CD4-positive, alpha-beta memory T cell (primary cell): ENCODE measurements at regions of chr1 and their contacts with region 1.

Region 1: GRCh38 chr1:11681071-11681771 is at the start of gene MAD2L2:
- DNase-seq: peak; percentile 87 to 89 (median 88)
- H3K4me3 ChIP-seq: peak within 1 kb of the TSS; percentile 52 to 87
- H3K4me3 Mint-ChIP-seq: peak within 1 kb of the TSS; percentile 93 to 99 (median 96)
- H3K27ac ChIP-seq: peak within 1 kb of the TSS; percentile 76
- H3K27ac Mint-ChIP-seq: peak within 1 kb of the TSS; percentile 89 to 96 (median 91)
- H3K4me1 ChIP-seq: peaks cover 21% of the 10 kb centered on the region
- H3K4me1 Mint-ChIP-seq: peaks cover 10 to 25% (median 18%) of the 10 kb centered on the region in 4 donors
- H3K27me3 ChIP-seq: no peaks in the 10 kb centered on the region
- H3K27me3 Mint-ChIP-seq: peaks cover 2 to 5% of the 10 kb centered on the region in 2 donors
- total RNA-seq, gene MAD2L2: 20.7 to 22.7 TPM

Region 2: GRCh38 chr1:11654137-11654938 is 26.9 kb before region 1 on chr1 and contains the starts of genes FBXO2 and FBXO44:
- CTCF ChIA-PET with region 1: interaction called, 6 read pairs
- POLR2A ChIA-PET with region 1: interaction called, 11 read pairs
- intact Hi-C with region 1: loop called (anchors 1 kb)
- DNase-seq: peak; percentile 50 to 77 (median 67)
- H3K4me3 ChIP-seq: peak within 1 kb of the TSS; percentile 55 to 58
- H3K4me3 Mint-ChIP-seq: peak within 1 kb of the TSS; percentile 66 to 84 (median 77)
- H3K27ac ChIP-seq: peak within 1 kb of the TSS; percentile 38
- H3K27ac Mint-ChIP-seq: peak within 1 kb of the TSS in 5 of 7 donors; percentile 6 to 75 (median 60)
- H3K4me1 ChIP-seq: peaks cover 32% of the 10 kb centered on the region
- H3K4me1 Mint-ChIP-seq: peaks cover 11 to 44% (median 31%) of the 10 kb centered on the region in 4 donors
- H3K27me3 ChIP-seq: no peaks in the 10 kb centered on the region
- H3K27me3 Mint-ChIP-seq: no peaks in the 10 kb centered on the region
- total RNA-seq, gene FBXO2: 4.4 to 5.1 TPM
- total RNA-seq, gene FBXO44: 56.7 to 56.9 TPM

Region 3: DNA sequence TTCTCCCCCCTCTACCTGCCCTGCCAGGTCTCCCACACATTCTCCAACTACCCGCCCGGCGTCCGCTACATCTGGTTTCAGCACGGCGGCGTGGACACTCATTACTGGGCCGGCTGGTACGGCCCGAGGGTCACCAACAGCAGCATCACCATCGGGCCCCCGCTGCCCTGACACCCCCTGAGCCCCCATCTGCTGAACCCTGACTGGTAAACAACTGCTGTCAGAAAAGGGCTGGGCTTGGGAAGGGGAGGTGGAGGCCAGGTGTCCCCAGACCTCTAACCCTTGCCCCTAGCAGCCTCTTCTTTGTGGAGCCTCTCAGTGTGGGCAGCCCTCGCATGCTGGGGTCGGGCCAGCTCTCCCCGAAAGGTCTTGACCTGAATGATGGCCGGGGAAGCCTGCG is 20.1 kb before region 1 on chr1:
- CTCF ChIA-PET with region 1: interaction called, 28 read pairs
- POLR2A ChIA-PET with region 1: interaction called, 40 read pairs
- intact Hi-C with region 1: loop called (anchors 1 kb)
- DNase-seq: no peak
- H3K4me3 ChIP-seq: no peak overlapping the region
- H3K4me3 Mint-ChIP-seq: no peak overlapping the region
- H3K27ac ChIP-seq: no peak overlapping the region
- H3K27ac Mint-ChIP-seq: no peak overlapping the region
- H3K4me1 ChIP-seq: peaks cover 8% of the 10 kb centered on the region
- H3K4me1 Mint-ChIP-seq: peaks cover 0 to under 1% (median 0%) of the 10 kb centered on the region in 4 donors
- H3K27me3 ChIP-seq: no peaks in the 10 kb centered on the region
- H3K27me3 Mint-ChIP-seq: no peaks in the 10 kb centered on the region

Region 4: DNA sequence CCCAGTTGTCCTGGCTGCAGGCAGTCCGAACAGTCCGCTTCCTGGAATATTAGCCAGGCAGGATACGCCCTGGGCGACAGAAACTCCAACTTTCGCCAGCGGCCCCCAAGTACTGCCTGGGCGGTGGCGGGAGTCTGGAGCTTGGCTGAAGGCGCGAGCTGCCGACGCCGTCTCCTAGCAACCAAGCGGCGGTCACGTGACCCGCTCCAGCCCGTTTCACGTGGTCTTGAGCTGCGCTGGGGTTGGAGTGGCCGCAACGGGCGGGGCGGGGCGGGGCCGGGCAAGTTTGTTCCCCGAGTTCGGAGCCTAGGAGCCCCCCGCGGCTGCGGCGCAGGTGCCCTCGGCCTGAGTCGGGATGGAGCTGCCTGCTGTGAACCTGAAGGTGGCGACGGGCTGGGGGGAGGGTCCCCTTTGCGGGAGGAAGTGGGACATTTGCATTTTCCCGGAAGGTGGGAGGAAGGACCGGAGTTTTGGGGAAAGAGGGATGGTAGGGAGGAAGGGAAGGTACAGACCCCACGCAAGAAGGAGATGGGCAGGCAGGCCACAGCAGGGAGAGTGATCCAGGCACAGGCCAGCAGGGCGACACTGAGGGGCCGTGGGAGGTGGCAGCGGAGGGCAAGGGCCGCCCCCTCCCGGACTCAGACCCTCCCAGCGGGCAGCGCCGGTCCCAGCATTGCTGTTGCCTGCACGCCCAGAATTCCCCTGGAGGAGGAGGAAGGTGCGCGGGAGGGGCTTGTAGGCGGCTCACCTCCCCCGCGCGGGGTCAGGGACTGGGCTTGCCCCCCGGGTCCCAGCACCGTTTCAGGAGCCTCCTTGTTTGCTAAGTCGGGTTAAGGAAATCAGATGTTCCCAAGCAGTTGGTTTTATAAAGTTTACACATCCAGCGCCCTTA is 54.9 kb after region 1 on chr1 and contains the start of gene AGTRAP:
- CTCF ChIA-PET with region 1: no interaction called
- POLR2A ChIA-PET with region 1: no interaction called
- intact Hi-C with region 1: loop called (anchors 5 kb)
- DNase-seq: peak; percentile 77 to 89 (median 79)
- H3K4me3 ChIP-seq: peak within 1 kb of the TSS; percentile 84 to 93
- H3K4me3 Mint-ChIP-seq: peak within 1 kb of the TSS; percentile 89 to 97 (median 92)
- H3K27ac ChIP-seq: peak within 1 kb of the TSS; percentile 81
- H3K27ac Mint-ChIP-seq: peak within 1 kb of the TSS; percentile 44 to 93 (median 87)
- H3K4me1 ChIP-seq: peaks cover 60% of the 10 kb centered on the region
- H3K4me1 Mint-ChIP-seq: peaks cover 39 to 81% (median 56%) of the 10 kb centered on the region in 4 donors
- H3K27me3 ChIP-seq: no peaks in the 10 kb centered on the region
- H3K27me3 Mint-ChIP-seq: no peaks in the 10 kb centered on the region
- total RNA-seq, gene AGTRAP: 19.0 to 21.7 TPM

Region 5: DNA sequence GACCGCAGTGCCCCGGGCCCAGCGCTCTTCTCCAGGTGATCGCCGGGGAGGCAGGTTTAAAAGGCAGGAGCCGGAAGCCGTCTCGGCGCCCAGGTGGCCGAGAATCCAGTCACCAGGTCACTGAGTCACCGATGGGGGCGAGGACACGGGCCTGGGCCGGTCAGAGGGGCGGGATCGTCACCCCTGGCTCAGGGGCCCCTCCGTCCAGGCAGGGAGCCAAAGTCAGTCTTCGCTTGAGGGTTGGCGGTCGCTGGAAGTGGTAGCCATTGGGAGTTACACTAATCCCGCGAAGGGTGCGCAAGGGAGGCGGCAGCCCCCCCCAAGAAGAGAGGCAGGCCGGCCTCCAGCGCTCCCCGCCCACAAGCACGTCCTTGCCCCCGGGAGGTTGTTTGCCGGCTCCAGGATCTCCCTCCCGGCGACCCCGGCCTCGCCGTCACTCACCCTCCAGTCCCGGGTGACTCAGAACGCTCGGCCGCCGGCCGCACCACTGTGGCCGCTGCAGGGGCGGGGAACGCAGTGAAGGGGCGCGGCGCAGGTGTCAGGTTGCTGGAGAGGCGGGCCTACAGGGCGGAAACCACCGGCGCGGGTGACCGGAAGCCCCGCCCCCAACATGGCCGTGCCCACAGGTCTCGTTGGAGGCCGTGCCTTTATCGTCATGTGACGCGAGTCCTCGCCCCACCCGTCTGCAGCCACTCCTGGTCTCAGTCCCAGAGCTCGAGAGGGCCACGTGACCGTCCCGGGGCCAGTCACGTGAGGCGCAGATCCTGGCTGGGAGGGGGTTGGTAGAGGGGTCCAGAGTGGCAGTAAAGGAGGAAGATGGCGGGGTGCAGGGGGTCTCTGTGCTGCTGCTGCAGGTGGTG is 124.5 kb after region 1 on chr1 and contains the starts of genes CLCN6 and MTHFR:
- CTCF ChIA-PET with region 1: no interaction called
- POLR2A ChIA-PET with region 1: interaction called, 3 read pairs
- intact Hi-C with region 1: loop called (anchors 5 kb)
- DNase-seq: peak; percentile 97 to 99 (median 98)
- H3K4me3 ChIP-seq: peak within 1 kb of the TSS; percentile 37 to 86
- H3K4me3 Mint-ChIP-seq: peak within 1 kb of the TSS; percentile 96 to 100 (median 98)
- H3K27ac ChIP-seq: peak within 1 kb of the TSS; percentile 73
- H3K27ac Mint-ChIP-seq: peak within 1 kb of the TSS; percentile 92 to 100 (median 99)
- H3K4me1 ChIP-seq: peaks cover 55% of the 10 kb centered on the region
- H3K4me1 Mint-ChIP-seq: peaks cover 35 to 76% (median 58%) of the 10 kb centered on the region in 4 donors
- H3K27me3 ChIP-seq: no peaks in the 10 kb centered on the region
- H3K27me3 Mint-ChIP-seq: no peaks in the 10 kb centered on the region
- total RNA-seq, gene CLCN6: 20.8 to 20.9 TPM
- total RNA-seq, gene MTHFR: 52.7 to 54.2 TPM